Heart left ventricle (tissue), 16 donors: ENCODE measurements at regions of chr7 and their contacts with region 1.

Region 1: GRCh38 chr7:82729172-82730030 is 285.8 kb upstream of the CACNA2D1 start:
- DNase-seq: no peak
- ATAC-seq: no peak
- H3K4me3 ChIP-seq: no peak overlapping the region
- H3K27ac ChIP-seq: no peak overlapping the region
- H3K4me1 ChIP-seq: no peaks in the 10 kb centered on the region
- H3K27me3 ChIP-seq: no peaks in the 10 kb centered on the region
- CTCF ChIP-seq: peak; percentile 29 to 59 (median 48)
- POLR2A ChIP-seq: no peak

Region 2: GRCh38 chr7:81482600-81483186 is 1246.7 kb before region 1 on chr7:
- intact Hi-C with region 1: loop called in 2 of 10 experiments (anchors 5 to 10 kb)
- DNase-seq: no peak
- ATAC-seq: peak in 1 of 4 donors; percentile 37
- H3K4me3 ChIP-seq: no peak overlapping the region
- H3K27ac ChIP-seq: no peak overlapping the region
- H3K4me1 ChIP-seq: peaks cover 0 to 21% (median 4%) of the 10 kb centered on the region in 12 donors
- H3K27me3 ChIP-seq: no peaks in the 10 kb centered on the region
- CTCF ChIP-seq: peak; percentile 51 to 79 (median 70)
- POLR2A ChIP-seq: no peak

Region 3: GRCh38 chr7:81499262-81500116 is 1229.9 kb before region 1 on chr7:
- intact Hi-C with region 1: loop called in 3 of 10 experiments (anchors 5 to 10 kb)
- DNase-seq: peak in 1 of 5 donors; percentile 22
- ATAC-seq: peak; percentile 64 to 92 (median 76)
- H3K4me3 ChIP-seq: no peak overlapping the region
- H3K27ac ChIP-seq: peak overlapping the region in 7 of 12 donors; percentile 4 to 66 (median 38)
- H3K4me1 ChIP-seq: peaks cover 0 to 26% (median 8%) of the 10 kb centered on the region in 12 donors
- H3K27me3 ChIP-seq: no peaks in the 10 kb centered on the region
- CTCF ChIP-seq: peak; percentile 15 to 75 (median 59)
- POLR2A ChIP-seq: no peak

Region 4: DNA sequence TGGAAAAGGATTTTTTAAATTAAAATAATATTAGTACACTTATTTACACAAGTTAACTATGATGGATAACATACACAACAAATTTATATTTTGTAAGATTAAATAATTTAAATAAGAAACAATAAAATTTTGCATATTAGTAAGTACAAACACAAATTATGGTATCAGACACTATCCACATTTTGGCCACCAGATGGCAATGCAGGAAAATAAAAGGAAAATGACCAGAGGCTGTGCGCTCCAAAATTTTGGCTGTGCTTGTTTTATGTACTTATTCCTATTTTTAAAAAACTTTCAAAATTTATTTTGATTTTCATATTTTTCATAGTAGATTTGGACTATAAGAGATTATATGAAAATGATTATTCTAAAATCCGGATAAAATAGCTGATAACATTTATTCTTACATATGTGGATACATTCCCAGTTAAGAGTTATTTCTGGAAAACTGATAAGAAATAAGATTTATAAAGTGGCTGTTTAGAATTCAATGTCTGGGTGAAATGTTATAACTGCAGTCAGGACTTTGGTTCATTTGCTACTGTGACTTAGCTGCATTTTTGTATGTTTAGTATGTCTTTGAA is 684.8 kb before region 1 on chr7:
- intact Hi-C with region 1: loop called in 5 of 10 experiments (anchors 5 to 10 kb)
- DNase-seq: peak in 3 of 5 donors; percentile 23 to 36 (median 24)
- ATAC-seq: peak in 2 of 4 donors; percentile 32 to 62
- H3K4me3 ChIP-seq: no peak overlapping the region
- H3K27ac ChIP-seq: no peak overlapping the region
- H3K4me1 ChIP-seq: peaks cover 0 to 13% (median 5%) of the 10 kb centered on the region in 12 donors
- H3K27me3 ChIP-seq: no peaks in the 10 kb centered on the region
- CTCF ChIP-seq: peak; percentile 60 to 82 (median 70)
- POLR2A ChIP-seq: no peak

Region 5: GRCh38 chr7:82605247-82605872 is 124.0 kb before region 1 on chr7:
- intact Hi-C with region 1: loop called in 2 of 10 experiments (anchors 5 to 10 kb)
- DNase-seq: no peak
- ATAC-seq: no peak
- H3K4me3 ChIP-seq: no peak overlapping the region
- H3K27ac ChIP-seq: no peak overlapping the region
- H3K4me1 ChIP-seq: no peaks in the 10 kb centered on the region
- H3K27me3 ChIP-seq: no peaks in the 10 kb centered on the region
- CTCF ChIP-seq: peak; percentile 50 to 82 (median 68)
- POLR2A ChIP-seq: no peak

Region 6: GRCh38 chr7:82615527-82615926 is 113.9 kb before region 1 on chr7:
- intact Hi-C with region 1: loop called in 1 of 10 experiments (anchors 10 kb)
- DNase-seq: no peak
- ATAC-seq: peak in 1 of 4 donors; percentile 29
- H3K4me3 ChIP-seq: no peak overlapping the region
- H3K27ac ChIP-seq: peak overlapping the region in 1 of 12 donors; percentile 69
- H3K4me1 ChIP-seq: peaks cover 0 to 4% (median 0%) of the 10 kb centered on the region in 12 donors
- H3K27me3 ChIP-seq: no peaks in the 10 kb centered on the region
- CTCF ChIP-seq: no peak
- POLR2A ChIP-seq: no peak

Region 7: DNA sequence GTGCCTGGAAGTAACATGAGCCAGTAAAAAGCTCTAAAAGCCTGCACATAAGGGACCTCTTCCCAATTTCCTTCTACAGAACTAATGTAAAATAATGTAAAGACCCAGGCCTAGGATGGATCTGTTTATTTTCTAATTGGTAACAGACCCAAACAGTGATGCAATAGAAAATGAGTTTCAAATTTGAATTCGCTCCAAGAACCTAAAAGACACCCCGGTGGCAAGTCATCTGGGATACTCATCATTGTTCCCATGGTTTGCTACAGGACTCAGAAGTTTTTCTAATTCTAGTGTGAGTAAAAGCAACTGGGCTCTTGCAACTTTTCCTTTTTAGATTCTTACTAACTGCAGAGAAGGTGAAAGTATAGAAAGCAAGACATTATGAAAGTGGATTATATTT is 14.5 kb before region 1 on chr7:
- intact Hi-C with region 1: no loop called
- DNase-seq: no peak
- ATAC-seq: no peak
- H3K4me3 ChIP-seq: no peak overlapping the region
- H3K27ac ChIP-seq: no peak overlapping the region
- H3K4me1 ChIP-seq: no peaks in the 10 kb centered on the region
- H3K27me3 ChIP-seq: no peaks in the 10 kb centered on the region
- CTCF ChIP-seq: no peak
- POLR2A ChIP-seq: no peak